ENCODE measurements at regions of chr22 and their contacts with region 1.

Region 1: GRCh38 chr22:45163451-45164269 is at the start of gene NUP50:
- DNase-seq: peak; percentile 97
- ATAC-seq: peak; percentile 78
- H3K4me3 Mint-ChIP-seq: peak within 1 kb of the TSS; percentile 97
- H3K27ac Mint-ChIP-seq: peak within 1 kb of the TSS; percentile 90
- H3K4me1 Mint-ChIP-seq: peaks cover 38% of the 10 kb centered on the region
- H3K27me3 Mint-ChIP-seq: no peaks in the 10 kb centered on the region
- CTCF ChIP-seq: no peak
- total RNA-seq, gene NUP50: 91.2 and 112 TPM in 2 replicates

Region 2: GRCh38 chr22:44956840-44957767 is 206.6 kb before region 1 on chr22:
- CTCF ChIA-PET with region 1: no interaction called
- POLR2A ChIA-PET with region 1: no interaction called
- intact Hi-C with region 1: no loop called
- DNase-seq: no peak
- ATAC-seq: no peak
- H3K4me3 Mint-ChIP-seq: no peak overlapping the region
- H3K27ac Mint-ChIP-seq: no peak overlapping the region
- H3K4me1 Mint-ChIP-seq: no peaks in the 10 kb centered on the region
- H3K27me3 Mint-ChIP-seq: peaks cover 4% of the 10 kb centered on the region
- CTCF ChIP-seq: no peak

Region 3: DNA sequence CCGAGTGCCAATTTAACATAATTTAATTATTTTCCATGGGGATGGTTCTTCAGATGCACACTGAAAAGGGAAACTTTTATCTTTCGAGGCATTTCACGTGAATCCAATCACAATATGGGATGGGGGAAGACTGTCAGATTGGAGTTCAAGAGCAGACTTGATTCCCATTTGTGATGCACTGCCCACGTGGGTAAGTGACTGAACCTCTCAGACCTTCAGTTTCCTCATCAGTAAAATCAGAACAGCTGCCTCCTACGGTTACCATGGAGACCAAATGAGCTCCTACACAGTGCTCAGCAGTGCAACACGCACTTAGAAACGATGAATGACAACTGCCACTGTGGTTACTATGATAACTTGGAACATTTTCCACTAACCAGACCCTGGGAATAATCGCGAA is 55.3 kb after region 1 on chr22:
- CTCF ChIA-PET with region 1: no interaction called
- POLR2A ChIA-PET with region 1: interaction called, 5 read pairs
- intact Hi-C with region 1: loop called (anchors 5 kb)
- DNase-seq: no peak
- ATAC-seq: peak; percentile 96
- H3K4me3 Mint-ChIP-seq: no peak overlapping the region
- H3K27ac Mint-ChIP-seq: peak overlapping the region; percentile 46
- H3K4me1 Mint-ChIP-seq: peaks cover 60% of the 10 kb centered on the region
- H3K27me3 Mint-ChIP-seq: no peaks in the 10 kb centered on the region
- CTCF ChIP-seq: no peak

Region 4: DNA sequence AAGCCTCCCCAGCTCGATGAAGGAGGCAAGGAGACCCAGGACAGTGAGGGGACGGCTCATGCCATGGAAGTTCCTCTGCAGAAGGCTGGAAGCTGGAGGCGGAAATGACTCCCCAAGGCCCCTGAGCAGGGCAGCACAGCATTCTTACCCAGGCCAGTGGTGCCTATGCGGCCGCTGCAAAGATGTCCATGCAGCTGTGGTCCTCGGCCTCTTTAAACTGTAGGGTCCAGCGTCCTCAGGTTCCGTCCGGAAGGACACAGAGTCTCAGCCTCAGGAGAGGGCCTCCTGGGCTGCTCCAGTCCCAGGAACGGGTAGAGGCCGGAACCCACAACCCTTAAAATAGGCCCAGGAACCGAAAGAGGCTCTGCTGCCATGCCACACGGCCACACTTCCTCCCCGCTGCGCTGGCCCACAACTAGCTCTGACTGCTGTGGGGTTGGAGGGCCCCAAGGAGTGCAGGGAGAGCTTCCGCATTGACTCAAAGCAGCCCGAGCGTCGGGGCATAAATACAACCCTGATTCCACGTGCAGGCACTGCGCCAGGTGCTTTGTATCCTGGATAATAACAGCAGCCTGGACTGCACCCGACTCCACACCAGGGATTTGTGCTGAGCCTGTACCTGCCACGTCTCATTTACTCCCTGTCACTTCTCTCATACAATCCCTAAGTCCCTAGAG is 71.6 kb after region 1 on chr22:
- CTCF ChIA-PET with region 1: interaction called, 6 read pairs
- POLR2A ChIA-PET with region 1: interaction called, 20 read pairs
- intact Hi-C with region 1: loop called (anchors 2 kb)
- DNase-seq: peak; percentile 64
- ATAC-seq: peak; percentile 93
- H3K4me3 Mint-ChIP-seq: peak overlapping the region; percentile 70
- H3K27ac Mint-ChIP-seq: peak overlapping the region; percentile 88
- H3K4me1 Mint-ChIP-seq: peaks cover 86% of the 10 kb centered on the region
- H3K27me3 Mint-ChIP-seq: no peaks in the 10 kb centered on the region
- CTCF ChIP-seq: no peak

Region 5: GRCh38 chr22:45240810-45241631 is 77.4 kb after region 1 on chr22 and contains the start of gene KIAA0930:
- CTCF ChIA-PET with region 1: no interaction called
- POLR2A ChIA-PET with region 1: interaction called, 20 read pairs
- intact Hi-C with region 1: loop called (anchors 2 kb)
- DNase-seq: peak; percentile 71
- ATAC-seq: peak; percentile 69
- H3K4me3 Mint-ChIP-seq: peak within 1 kb of the TSS; percentile 87
- H3K27ac Mint-ChIP-seq: peak within 1 kb of the TSS; percentile 88
- H3K4me1 Mint-ChIP-seq: peaks cover 60% of the 10 kb centered on the region
- H3K27me3 Mint-ChIP-seq: no peaks in the 10 kb centered on the region
- CTCF ChIP-seq: no peak
- total RNA-seq, gene KIAA0930: 39.5 and 42.2 TPM in 2 replicates

Region 6: DNA sequence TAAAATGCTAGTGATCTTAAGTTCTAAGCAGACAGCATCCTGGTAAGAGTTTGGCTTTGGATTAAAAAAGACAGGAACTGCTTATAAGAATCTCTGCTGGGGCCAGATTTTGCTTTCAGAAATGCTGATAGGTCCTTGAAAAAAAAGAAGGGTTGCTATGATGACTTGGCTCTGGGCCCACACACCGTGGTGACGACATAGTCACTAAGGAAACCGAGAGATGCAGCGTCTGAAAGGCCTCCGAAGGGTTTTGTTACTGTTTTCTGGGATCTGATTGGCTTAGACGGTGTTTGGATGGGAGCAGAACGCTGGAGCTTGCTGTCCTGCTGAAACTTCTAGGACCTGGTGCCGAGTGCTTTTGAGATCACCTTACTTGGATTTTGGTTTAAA is 154.5 kb after region 1 on chr22:
- CTCF ChIA-PET with region 1: no interaction called
- POLR2A ChIA-PET with region 1: no interaction called
- intact Hi-C with region 1: no loop called
- DNase-seq: peak; percentile 57
- ATAC-seq: peak; percentile 88
- H3K4me3 Mint-ChIP-seq: peak overlapping the region; percentile 80
- H3K27ac Mint-ChIP-seq: peak overlapping the region; percentile 95
- H3K4me1 Mint-ChIP-seq: peaks cover 73% of the 10 kb centered on the region
- H3K27me3 Mint-ChIP-seq: no peaks in the 10 kb centered on the region
- CTCF ChIP-seq: no peak

Region 7: DNA sequence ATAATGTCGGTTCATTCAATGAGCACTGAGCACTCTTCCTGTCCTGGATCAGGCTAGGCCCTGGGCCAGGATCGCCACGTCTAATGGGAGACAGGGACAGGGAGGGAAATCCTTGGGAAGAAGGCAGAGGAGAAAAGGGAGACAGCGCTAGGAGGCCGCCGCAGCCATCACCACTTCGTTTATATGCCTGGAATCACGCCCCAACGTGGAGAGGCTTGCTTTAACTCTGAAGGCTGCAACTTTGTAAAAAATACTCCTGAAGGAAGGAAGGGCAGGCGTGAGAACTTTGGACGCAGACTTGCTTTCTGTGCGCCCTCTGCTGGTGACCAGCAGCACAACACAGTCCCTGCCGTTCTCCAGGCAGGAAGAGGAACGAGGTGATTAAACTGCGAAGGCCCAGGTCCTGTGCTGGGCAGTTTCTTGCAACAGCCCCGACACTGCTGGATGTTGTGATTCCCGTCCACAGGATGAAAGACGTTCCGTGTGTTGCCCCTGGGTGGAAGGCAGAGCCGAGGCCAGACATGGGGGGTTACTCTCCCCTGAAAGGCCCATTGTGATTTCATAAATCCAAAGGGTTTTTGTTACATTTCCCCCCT is 272.0 kb after region 1 on chr22:
- CTCF ChIA-PET with region 1: no interaction called
- POLR2A ChIA-PET with region 1: no interaction called
- intact Hi-C with region 1: loop called (anchors 10 kb)
- DNase-seq: peak; percentile 71
- ATAC-seq: peak; percentile 98
- H3K4me3 Mint-ChIP-seq: no peak overlapping the region
- H3K27ac Mint-ChIP-seq: no peak overlapping the region
- H3K4me1 Mint-ChIP-seq: peaks cover 15% of the 10 kb centered on the region
- H3K27me3 Mint-ChIP-seq: peaks cover 2% of the 10 kb centered on the region
- CTCF ChIP-seq: peak; percentile 55